ENCODE measurements at regions of chrX and their contacts with region 1.

Region 1: GRCh38 chrX:135484641-135485289 is 35.7 kb upstream of the INTS6L start:
- DNase-seq: no peak

Region 2: DNA sequence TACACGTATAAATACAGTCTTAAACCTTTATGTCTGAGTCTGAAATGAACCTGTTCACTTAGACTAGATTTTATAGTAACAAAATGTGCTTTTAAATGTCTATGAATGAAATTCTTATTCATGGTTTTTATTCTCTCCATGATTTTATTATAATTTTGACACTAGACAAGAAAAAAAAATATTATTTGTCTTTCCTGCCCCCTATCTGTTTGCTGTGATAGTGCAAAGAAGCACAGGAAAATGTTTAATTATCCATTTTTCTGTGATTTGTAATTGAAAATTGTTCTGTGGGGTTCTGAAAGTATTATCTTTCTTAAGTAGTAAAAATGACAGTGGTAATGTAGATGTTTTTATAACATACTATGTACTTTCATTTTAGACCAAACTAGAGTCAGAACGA is 87.7 kb after region 1 on chrX:
- intact Hi-C with region 1: loop called (anchors 5 kb)
- DNase-seq: no peak

Region 3: DNA sequence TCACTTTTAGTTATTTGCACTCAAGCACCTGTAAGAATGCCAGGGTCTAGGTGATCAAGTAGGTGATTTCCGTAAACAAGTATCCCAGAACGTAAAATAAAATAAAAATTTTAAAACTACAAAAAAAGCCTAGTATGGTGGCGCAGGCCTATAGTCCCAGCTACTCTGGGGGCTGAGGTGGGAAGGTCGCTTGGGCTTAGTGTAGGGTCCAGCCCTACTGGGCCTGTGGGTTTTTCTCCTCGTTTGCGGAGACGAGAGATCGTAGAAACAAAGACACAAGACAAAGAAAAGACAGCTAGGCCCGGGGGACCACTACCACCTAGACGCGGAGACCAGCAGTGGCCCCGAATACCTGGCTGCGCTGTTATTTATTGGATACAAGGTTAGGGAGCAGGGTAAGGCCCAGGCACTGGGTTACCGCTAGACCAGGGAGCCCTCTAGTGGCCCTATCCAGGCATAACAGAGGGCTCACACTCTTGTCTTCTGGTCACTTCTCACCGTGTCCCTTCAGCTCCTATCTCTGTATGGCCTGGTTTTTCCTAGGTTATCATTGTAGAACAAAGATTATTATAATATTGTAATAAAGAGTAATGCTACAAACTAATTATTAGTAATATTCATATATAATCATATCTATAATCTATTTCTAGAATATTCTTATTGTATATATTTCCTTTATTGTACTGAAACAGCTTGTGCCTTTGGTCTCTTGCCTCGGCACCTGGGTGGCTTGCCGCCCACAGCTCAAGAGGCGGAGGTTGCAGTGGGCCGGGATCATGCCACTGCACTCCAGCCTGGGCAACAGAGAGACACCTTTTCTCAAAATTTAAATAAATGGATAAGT is 447.1 kb after region 1 on chrX:
- intact Hi-C with region 1: loop called (anchors 10 kb)
- DNase-seq: no peak

Region 4: DNA sequence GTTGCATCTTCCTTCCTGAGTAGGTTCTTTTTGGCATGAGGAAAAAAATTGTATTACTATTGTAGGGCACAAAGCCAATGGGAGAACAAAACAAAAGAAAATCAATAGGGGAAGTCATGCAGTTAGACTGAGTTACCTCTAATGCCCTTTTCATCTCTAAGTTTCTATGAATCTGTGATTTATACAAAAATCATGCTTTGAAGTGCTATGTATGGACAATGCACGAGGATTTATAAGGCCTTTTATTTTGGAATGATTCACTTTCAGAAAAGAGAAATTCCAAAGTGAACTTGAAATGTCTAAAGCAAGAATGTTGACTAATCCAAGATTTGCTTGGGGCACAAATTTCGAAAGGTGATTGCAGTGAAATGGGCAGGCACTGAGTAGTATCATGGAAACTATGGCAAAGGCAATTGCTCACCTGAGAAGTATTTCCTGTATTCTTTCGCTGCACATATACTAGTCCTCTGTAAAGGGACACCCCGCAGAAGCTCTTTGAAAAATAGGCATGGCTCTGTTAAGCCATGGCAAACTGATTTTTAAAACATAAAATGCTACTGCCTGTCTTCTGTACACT is 868.8 kb after region 1 on chrX:
- intact Hi-C with region 1: no loop called
- DNase-seq: no peak

Measured in cardiac septum (tissue), 1 donor.